Motor neuron (in vitro differentiated cells): ENCODE measurements at regions of chr10 and their contacts with region 1.

Region 1: GRCh38 chr10:124741281-124741921 is 2.8 kb downstream of the FAM53B start:
- ATAC-seq: peak; percentile 7 to 62 (median 48)
- H3K4me3 ChIP-seq: peak overlapping the region in 3 of 5 donors; percentile 1 to 73 (median 59)
- H3K27ac ChIP-seq: no peak overlapping the region
- H3K4me1 ChIP-seq: peaks cover 60 to 61% of the 10 kb centered on the region in 2 donors

Region 2: DNA sequence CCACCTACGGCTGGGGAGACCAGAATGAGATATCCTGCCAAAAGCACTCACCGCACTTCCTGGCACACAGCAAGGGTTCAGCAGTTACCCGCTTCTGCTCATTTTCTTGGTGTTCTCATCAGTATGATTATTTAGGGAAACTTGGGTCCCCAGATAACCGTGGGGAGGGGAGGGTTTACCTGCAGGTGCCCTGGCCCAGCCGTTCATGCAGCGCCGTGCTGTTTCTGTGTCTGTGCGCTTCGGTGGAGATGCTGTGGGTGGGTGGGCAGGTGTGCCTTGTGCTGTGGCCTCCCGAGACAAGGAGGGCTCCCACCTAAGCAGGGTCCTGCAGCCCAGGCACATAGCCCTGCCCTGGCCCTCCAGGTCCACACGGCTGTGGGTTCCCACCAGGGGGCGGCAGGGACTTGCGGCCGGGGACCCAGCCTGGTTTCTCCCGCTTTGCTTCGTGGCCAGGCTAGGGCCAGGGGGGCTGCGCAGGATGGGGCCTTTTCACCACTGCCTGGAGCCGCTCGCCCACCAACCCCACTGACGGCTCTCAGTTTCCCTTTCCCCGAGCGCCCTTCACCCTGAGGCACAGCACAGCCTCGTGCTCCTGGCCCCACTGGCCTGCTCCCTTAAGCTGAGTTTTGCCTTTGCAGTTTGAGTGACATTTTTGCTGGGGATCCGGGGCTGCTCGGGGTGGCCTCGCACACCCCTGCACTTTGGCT is 201.3 kb before region 1 on chr10:
- in situ Hi-C with region 1: loop called in 6 of 9 experiments (anchors 10 to 25 kb)
- ATAC-seq: peak; percentile 73 to 96 (median 86)
- H3K4me3 ChIP-seq: no peak overlapping the region
- H3K27ac ChIP-seq: no peak overlapping the region
- H3K4me1 ChIP-seq: peaks cover 5 to 16% of the 10 kb centered on the region in 2 donors

Region 3: DNA sequence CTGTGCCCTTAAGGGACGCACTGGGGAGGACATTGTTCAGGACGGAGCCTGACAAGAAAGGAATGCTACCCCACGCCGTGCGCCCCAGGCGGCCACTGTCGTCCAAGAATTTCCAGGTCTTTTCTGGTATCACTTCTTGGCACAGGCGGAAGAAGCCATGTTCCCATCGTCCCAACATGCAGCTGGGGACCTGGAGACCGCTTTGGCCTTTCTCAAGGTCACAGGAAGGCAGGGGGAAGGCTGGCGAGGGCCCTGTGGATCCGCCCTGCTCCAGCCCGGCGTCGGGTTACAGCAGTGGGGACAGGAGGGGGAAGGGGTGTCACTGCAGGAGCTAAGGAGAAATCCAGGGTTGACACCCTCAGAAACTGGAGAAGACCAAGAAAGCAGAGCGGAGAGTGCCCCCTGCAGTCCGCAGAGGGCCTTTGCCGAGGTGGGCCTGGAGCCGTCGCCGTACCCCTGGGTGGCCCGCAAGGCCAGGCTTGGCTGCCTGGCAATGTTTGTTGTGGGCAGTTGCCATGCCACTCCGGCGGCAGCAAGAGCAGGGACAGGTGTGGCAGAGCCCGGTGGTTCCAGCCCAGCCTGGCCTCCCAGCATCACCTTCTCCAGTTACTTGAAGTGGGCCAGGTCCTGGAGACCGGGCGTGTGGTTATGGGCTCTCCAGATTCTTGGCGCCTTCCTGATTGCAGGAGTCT is 175.7 kb before region 1 on chr10:
- in situ Hi-C with region 1: loop called in 1 of 9 experiments (anchors 25 kb)
- ATAC-seq: peak in 3 of 8 experiments; percentile 62 to 94 (median 64)
- H3K4me3 ChIP-seq: no peak overlapping the region
- H3K27ac ChIP-seq: no peak overlapping the region
- H3K4me1 ChIP-seq: peaks cover 14 to 34% of the 10 kb centered on the region in 2 donors

Region 4: GRCh38 chr10:124864421-124865193 is 123.2 kb after region 1 on chr10:
- in situ Hi-C with region 1: no loop called
- ATAC-seq: peak in 3 of 8 experiments; percentile 20 to 79 (median 77)
- H3K4me3 ChIP-seq: no peak overlapping the region
- H3K27ac ChIP-seq: no peak overlapping the region
- H3K4me1 ChIP-seq: peaks cover 0 to 4% of the 10 kb centered on the region in 2 donors

Region 5: GRCh38 chr10:124916585-124917427 is 175.4 kb after region 1 on chr10:
- in situ Hi-C with region 1: no loop called
- ATAC-seq: peak; percentile 90 to 97 (median 96)
- H3K4me3 ChIP-seq: peak overlapping the region; percentile 86 to 100 (median 92)
- H3K27ac ChIP-seq: peak overlapping the region; percentile 99
- H3K4me1 ChIP-seq: peaks cover 3 to 7% of the 10 kb centered on the region in 2 donors

Region 6: GRCh38 chr10:125190946-125191345 is 449.5 kb after region 1 on chr10:
- in situ Hi-C with region 1: no loop called
- ATAC-seq: peak in 1 of 8 experiments; percentile 47
- H3K4me3 ChIP-seq: no peak overlapping the region
- H3K27ac ChIP-seq: no peak overlapping the region
- H3K4me1 ChIP-seq: peaks cover 0 to 6% of the 10 kb centered on the region in 2 donors